ENCODE measurements at regions of chrX and their contacts with region 1.

Region 1: GRCh38 chrX:51614353-51615012 is 4.2 kb downstream of the CENPVL3 start:
- DNase-seq: peak in 2 of 9 experiments; percentile 31 to 43
- ATAC-seq: no peak
- H3K4me3 ChIP-seq: no peak overlapping the region
- H3K4me3 Mint-ChIP-seq: no peak overlapping the region
- H3K27ac ChIP-seq: no peak overlapping the region
- H3K27ac Mint-ChIP-seq: no peak overlapping the region
- H3K4me1 ChIP-seq: no peaks in the 10 kb centered on the region
- H3K4me1 Mint-ChIP-seq: peaks cover 3% of the 10 kb centered on the region
- H3K27me3 ChIP-seq: no peaks in the 10 kb centered on the region
- H3K27me3 Mint-ChIP-seq: peaks cover 36% of the 10 kb centered on the region
- CTCF ChIP-seq: peak; percentile 44

Region 2: DNA sequence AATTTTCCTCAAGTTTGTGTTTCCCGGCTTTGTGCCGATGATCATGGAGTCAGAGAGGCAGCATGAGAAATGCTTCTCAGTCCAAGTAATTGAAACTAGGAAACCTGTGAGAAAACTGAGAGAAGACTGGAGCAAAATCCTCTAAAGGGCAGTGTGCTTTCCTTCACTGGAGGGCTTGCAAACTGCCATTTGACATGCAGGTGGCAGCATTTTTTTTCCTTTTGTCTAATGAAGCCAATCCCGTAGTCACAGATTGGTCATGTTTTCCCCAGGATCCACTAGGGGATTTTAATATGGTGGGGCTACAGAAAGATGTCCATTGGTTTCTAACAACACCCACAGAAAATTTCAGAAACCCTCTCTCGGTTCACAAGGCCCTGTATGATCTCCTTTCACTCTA is 399.2 kb before region 1 on chrX:
- CTCF ChIA-PET with region 1: no interaction called
- POLR2A ChIA-PET with region 1: no interaction called
- intact Hi-C with region 1: no loop called
- DNase-seq: no peak
- ATAC-seq: no peak
- H3K4me3 ChIP-seq: no peak overlapping the region
- H3K4me3 Mint-ChIP-seq: no peak overlapping the region
- H3K27ac ChIP-seq: no peak overlapping the region
- H3K27ac Mint-ChIP-seq: no peak overlapping the region
- H3K4me1 ChIP-seq: no peaks in the 10 kb centered on the region
- H3K4me1 Mint-ChIP-seq: no peaks in the 10 kb centered on the region
- H3K27me3 ChIP-seq: no peaks in the 10 kb centered on the region
- H3K27me3 Mint-ChIP-seq: no peaks in the 10 kb centered on the region
- CTCF ChIP-seq: no peak

Region 3: GRCh38 chrX:51316271-51316670 is 298.2 kb before region 1 on chrX:
- CTCF ChIA-PET with region 1: no interaction called
- POLR2A ChIA-PET with region 1: no interaction called
- intact Hi-C with region 1: no loop called
- DNase-seq: no peak
- ATAC-seq: no peak
- H3K4me3 ChIP-seq: no peak overlapping the region
- H3K4me3 Mint-ChIP-seq: no peak overlapping the region
- H3K27ac ChIP-seq: no peak overlapping the region
- H3K27ac Mint-ChIP-seq: no peak overlapping the region
- H3K4me1 ChIP-seq: no peaks in the 10 kb centered on the region
- H3K4me1 Mint-ChIP-seq: no peaks in the 10 kb centered on the region
- H3K27me3 ChIP-seq: no peaks in the 10 kb centered on the region
- H3K27me3 Mint-ChIP-seq: no peaks in the 10 kb centered on the region
- CTCF ChIP-seq: no peak

Region 4: DNA sequence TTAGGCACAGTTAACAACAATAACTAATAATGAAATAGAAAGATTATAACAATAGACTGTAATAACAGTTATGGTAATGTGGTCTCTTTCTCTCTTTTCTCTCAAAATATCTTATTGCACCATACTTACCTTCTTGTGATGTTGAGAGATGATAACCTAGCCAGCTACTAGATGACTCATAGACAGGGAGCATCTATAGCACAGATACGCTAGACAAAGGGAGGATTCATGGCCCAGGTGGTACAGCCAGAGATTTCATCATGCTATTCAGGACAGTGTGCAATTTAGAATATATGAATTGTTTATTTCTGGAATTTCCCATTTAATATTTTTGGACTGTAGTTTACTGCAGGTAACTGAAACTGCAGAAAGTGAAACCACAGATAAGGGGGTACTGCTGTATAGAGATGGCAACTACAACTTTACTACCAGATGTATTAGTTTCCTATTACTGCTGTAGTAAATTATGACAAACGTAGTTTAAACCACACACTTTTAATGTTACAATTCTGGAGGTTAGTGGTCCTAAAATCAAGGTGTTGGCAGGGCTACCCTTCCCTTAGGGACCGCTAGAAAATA is 237.1 kb after region 1 on chrX:
- CTCF ChIA-PET with region 1: no interaction called
- POLR2A ChIA-PET with region 1: no interaction called
- intact Hi-C with region 1: loop called (anchors 10 kb)
- DNase-seq: no peak
- ATAC-seq: no peak
- H3K4me3 ChIP-seq: no peak overlapping the region
- H3K4me3 Mint-ChIP-seq: no peak overlapping the region
- H3K27ac ChIP-seq: no peak overlapping the region
- H3K27ac Mint-ChIP-seq: no peak overlapping the region
- H3K4me1 ChIP-seq: no peaks in the 10 kb centered on the region
- H3K4me1 Mint-ChIP-seq: peaks cover 21% of the 10 kb centered on the region
- H3K27me3 ChIP-seq: no peaks in the 10 kb centered on the region
- H3K27me3 Mint-ChIP-seq: no peaks in the 10 kb centered on the region
- CTCF ChIP-seq: no peak